CD8-positive, alpha-beta T cell (primary cell): ENCODE measurements at regions of chr12 and their contacts with region 1.

Region 1: DNA sequence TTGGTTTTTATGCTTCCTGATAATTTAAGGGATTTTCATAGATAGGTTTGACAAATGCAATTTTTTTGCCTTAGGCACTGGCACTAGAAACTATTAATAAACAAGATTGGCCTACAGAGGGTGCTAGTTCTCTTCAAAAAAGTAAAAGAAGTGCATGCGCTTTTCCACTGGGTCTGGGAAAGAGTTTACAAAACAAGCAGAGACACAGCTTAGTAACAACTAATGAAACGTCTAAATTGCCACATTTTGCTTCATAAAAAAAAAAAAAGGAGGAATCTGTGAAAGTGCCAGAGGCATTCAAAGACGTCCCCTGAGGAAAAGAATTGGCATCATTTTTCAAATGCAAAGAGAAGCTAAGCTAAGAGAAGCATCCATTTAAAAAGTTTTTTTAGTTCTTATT is 58.3 kb upstream of the EEA1 start:
- DNase-seq: peak in 2 of 9 experiments; percentile 60 to 69
- ATAC-seq: peak; percentile 63
- H3K4me3 ChIP-seq: no peak overlapping the region
- H3K4me3 Mint-ChIP-seq: no peak overlapping the region
- H3K27ac ChIP-seq: no peak overlapping the region
- H3K27ac Mint-ChIP-seq: no peak overlapping the region
- H3K4me1 ChIP-seq: no peaks in the 10 kb centered on the region
- H3K4me1 Mint-ChIP-seq: peaks cover 9% of the 10 kb centered on the region
- H3K27me3 ChIP-seq: no peaks in the 10 kb centered on the region
- H3K27me3 Mint-ChIP-seq: no peaks in the 10 kb centered on the region
- CTCF ChIP-seq: peak; percentile 62

Region 2: DNA sequence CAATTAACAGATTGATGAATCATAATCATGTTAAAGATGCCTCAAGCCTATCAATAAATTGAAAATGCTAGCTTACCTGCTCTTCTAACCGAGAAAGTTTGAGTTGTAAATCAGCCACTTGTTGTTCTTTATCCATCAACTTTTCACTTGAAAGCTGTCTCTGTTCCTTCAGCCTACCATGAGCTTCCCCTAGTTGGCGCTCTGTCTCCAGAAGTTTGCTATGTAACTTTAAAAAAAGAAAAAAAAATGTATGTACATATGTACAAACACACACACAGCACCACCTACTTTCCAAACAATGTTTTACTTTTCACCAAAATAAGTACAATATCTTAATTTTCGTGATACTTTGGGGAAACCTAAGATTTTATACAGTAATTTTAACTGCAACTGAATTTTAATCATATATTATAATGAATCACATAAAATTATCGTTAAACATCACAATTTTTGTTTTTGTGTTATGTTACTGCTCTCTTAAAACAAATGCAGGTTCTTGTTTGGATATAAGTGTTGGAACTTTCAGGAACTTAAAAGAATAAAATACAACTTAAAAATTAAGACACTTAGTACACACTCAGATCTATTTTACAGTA is 159.4 kb before region 1 on chr12:
- CTCF ChIA-PET with region 1: interaction called, 7 read pairs
- POLR2A ChIA-PET with region 1: interaction called, 3 read pairs
- intact Hi-C with region 1: loop called in 1 of 2 experiments (anchors 10 kb)
- DNase-seq: peak in 6 of 9 experiments; percentile 9 to 61 (median 36)
- ATAC-seq: no peak
- H3K4me3 ChIP-seq: no peak overlapping the region
- H3K4me3 Mint-ChIP-seq: no peak overlapping the region
- H3K27ac ChIP-seq: no peak overlapping the region
- H3K27ac Mint-ChIP-seq: no peak overlapping the region
- H3K4me1 ChIP-seq: no peaks in the 10 kb centered on the region
- H3K4me1 Mint-ChIP-seq: peaks cover under 1% of the 10 kb centered on the region
- H3K27me3 ChIP-seq: no peaks in the 10 kb centered on the region
- H3K27me3 Mint-ChIP-seq: no peaks in the 10 kb centered on the region
- CTCF ChIP-seq: peak; percentile 64

Region 3: GRCh38 chr12:93008044-93008778 is 20.8 kb after region 1 on chr12:
- CTCF ChIA-PET with region 1: interaction called, 14 read pairs
- POLR2A ChIA-PET with region 1: no interaction called
- intact Hi-C with region 1: no loop called
- DNase-seq: no peak
- ATAC-seq: no peak
- H3K4me3 ChIP-seq: no peak overlapping the region
- H3K4me3 Mint-ChIP-seq: no peak overlapping the region
- H3K27ac ChIP-seq: no peak overlapping the region
- H3K27ac Mint-ChIP-seq: no peak overlapping the region
- H3K4me1 ChIP-seq: no peaks in the 10 kb centered on the region
- H3K4me1 Mint-ChIP-seq: no peaks in the 10 kb centered on the region
- H3K27me3 ChIP-seq: no peaks in the 10 kb centered on the region
- H3K27me3 Mint-ChIP-seq: no peaks in the 10 kb centered on the region
- CTCF ChIP-seq: no peak

Region 4: DNA sequence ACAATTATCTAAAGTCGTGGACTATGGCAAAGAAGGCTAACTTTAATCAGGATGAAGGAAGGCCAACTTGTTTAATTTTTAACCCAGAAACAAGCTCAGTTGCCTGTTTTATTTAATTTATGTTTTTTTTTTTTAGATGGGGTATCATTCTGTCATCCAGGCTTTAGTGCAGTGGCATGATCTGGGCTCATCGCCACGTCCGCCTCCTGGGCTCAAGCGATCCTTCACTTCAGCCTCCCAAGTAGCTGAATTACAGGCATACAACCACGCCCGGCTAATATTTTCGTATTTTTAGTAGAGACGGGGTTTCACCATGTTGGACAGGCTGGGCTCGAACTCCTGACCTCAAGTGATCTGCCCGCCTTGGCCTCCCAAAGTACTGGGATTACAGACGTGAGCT is 410.1 kb after region 1 on chr12:
- CTCF ChIA-PET with region 1: interaction called, 52 read pairs
- POLR2A ChIA-PET with region 1: no interaction called
- intact Hi-C with region 1: loop called (anchors 1 to 2 kb)
- DNase-seq: no peak
- ATAC-seq: no peak
- H3K4me3 ChIP-seq: no peak overlapping the region
- H3K4me3 Mint-ChIP-seq: no peak overlapping the region
- H3K27ac ChIP-seq: no peak overlapping the region
- H3K27ac Mint-ChIP-seq: no peak overlapping the region
- H3K4me1 ChIP-seq: no peaks in the 10 kb centered on the region
- H3K4me1 Mint-ChIP-seq: peaks cover 4% of the 10 kb centered on the region
- H3K27me3 ChIP-seq: no peaks in the 10 kb centered on the region
- H3K27me3 Mint-ChIP-seq: no peaks in the 10 kb centered on the region
- CTCF ChIP-seq: no peak

Region 5: GRCh38 chr12:93467351-93468007 is 480.1 kb after region 1 on chr12 and contains the start of gene MRPL42:
- CTCF ChIA-PET with region 1: interaction called, 3 read pairs
- POLR2A ChIA-PET with region 1: no interaction called
- intact Hi-C with region 1: loop called in 1 of 2 experiments (anchors 1 kb)
- DNase-seq: peak; percentile 88 to 96 (median 91)
- ATAC-seq: peak; percentile 94
- H3K4me3 ChIP-seq: peak within 1 kb of the TSS; percentile 64 to 95
- H3K4me3 Mint-ChIP-seq: peak within 1 kb of the TSS; percentile 93
- H3K27ac ChIP-seq: peak within 1 kb of the TSS; percentile 81 to 88
- H3K27ac Mint-ChIP-seq: peak within 1 kb of the TSS; percentile 95
- H3K4me1 ChIP-seq: peaks cover 15% of the 10 kb centered on the region
- H3K4me1 Mint-ChIP-seq: peaks cover 34% of the 10 kb centered on the region
- H3K27me3 ChIP-seq: no peaks in the 10 kb centered on the region
- H3K27me3 Mint-ChIP-seq: no peaks in the 10 kb centered on the region
- CTCF ChIP-seq: peak; percentile 71
- total RNA-seq, gene MRPL42: 31.6 to 33.2 TPM